Breast epithelium (tissue), 4 donors: ENCODE measurements at regions of chr7 and their contacts with region 1.

Region 1: GRCh38 chr7:122145937-122146645 is 2.0 kb upstream of the AASS start:
- DNase-seq: no peak
- H3K4me3 ChIP-seq: no peak overlapping the region
- H3K27ac ChIP-seq: no peak overlapping the region
- H3K4me1 ChIP-seq: no peaks in the 10 kb centered on the region
- H3K27me3 ChIP-seq: no peaks in the 10 kb centered on the region
- CTCF ChIP-seq: no peak
- POLR2A ChIP-seq: no peak

Region 2: DNA sequence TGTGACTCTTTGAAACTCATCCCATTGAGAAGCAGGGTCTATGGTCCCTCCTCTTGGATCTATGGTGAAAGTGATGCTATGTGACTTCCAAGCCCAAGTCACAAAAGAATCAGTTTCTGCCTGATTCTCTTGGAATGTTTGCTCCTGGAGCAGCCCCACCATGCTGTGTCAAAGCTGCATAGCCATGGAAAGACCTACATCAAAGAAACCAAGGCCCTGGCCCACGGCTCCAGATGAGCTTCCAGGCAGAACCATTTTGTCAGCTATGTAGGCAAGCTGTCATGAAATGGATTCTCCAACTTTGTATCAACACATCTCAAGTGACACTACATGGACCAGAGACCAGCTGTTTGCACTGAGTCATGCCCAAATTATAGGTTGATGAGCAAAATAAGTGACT is 79.0 kb before region 1 on chr7:
- intact Hi-C with region 1: no loop called
- DNase-seq: no peak
- H3K4me3 ChIP-seq: no peak overlapping the region
- H3K27ac ChIP-seq: no peak overlapping the region
- H3K4me1 ChIP-seq: no peaks in the 10 kb centered on the region
- H3K27me3 ChIP-seq: no peaks in the 10 kb centered on the region
- CTCF ChIP-seq: no peak
- POLR2A ChIP-seq: no peak

Region 3: GRCh38 chr7:122182081-122182480 is 36.0 kb after region 1 on chr7:
- intact Hi-C with region 1: loop called (anchors 2 kb)
- DNase-seq: no peak
- H3K4me3 ChIP-seq: no peak overlapping the region
- H3K27ac ChIP-seq: no peak overlapping the region
- H3K4me1 ChIP-seq: no peaks in the 10 kb centered on the region
- H3K27me3 ChIP-seq: no peaks in the 10 kb centered on the region
- CTCF ChIP-seq: no peak
- POLR2A ChIP-seq: no peak

Region 4: DNA sequence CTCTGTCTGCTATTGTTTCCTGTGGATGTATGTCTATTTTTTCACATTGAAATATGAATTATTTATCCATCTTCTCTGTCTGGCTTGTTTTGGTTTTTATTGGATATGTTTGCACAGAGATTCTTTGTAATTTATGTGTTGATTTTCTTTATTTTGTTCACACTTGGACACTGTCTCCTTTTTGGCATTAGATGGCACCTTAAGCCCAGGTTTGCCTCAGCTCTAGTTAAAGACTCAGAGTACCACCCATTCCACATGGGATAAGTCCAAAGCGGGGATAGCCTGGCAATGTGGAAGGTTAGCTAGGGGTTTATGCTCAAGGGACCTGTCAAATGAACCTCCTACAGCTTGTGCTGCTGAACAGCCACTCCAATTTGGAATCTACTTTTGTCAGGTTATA is 144.4 kb after region 1 on chr7:
- intact Hi-C with region 1: no loop called
- DNase-seq: no peak
- H3K4me3 ChIP-seq: no peak overlapping the region
- H3K27ac ChIP-seq: no peak overlapping the region
- H3K4me1 ChIP-seq: no peaks in the 10 kb centered on the region
- H3K27me3 ChIP-seq: peaks cover 0 to 14% of the 10 kb centered on the region in 2 donors
- CTCF ChIP-seq: no peak
- POLR2A ChIP-seq: no peak